ENCODE measurements at regions of chr10 and their contacts with region 1.

Region 1: DNA sequence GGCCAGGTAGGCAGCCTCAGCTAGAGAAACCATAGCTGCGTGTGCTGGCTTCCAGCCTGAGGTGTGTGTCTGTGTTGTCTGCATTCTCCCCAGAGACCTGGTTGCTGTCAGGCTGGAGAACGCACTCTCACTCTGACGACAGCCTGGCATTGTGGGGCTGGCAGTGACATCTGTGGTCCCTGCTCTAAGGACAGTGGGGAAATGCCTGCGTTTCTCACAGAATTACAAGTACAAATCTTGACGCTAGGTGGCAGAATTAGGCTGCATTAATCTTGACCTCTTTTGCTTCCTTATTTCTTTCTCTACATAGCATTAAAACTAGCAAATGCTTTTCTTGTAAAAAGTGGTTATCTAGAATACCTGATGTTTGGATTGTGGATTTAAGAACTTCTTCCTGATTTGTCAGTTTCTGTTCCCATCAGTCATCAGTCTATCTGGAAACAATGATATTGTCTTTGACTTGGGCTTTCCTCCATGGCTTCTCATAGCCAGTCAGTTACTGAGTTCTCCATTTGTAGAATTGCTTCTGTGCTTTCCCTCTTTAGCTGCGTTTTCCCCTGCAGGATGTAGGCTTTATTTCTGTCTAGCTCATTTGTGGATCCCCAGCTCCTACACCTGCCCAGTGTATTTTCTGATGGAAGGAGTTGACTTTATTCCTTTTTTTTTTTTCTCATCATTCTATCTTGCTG is 86.0 kb downstream of the FANK1 start:
- DNase-seq: peak; percentile 79
- H3K4me3 ChIP-seq: no peak overlapping the region
- H3K27ac ChIP-seq: no peak overlapping the region
- H3K4me1 ChIP-seq: no peaks in the 10 kb centered on the region
- H3K27me3 ChIP-seq: no peaks in the 10 kb centered on the region
- CTCF ChIP-seq: peak; percentile 69

Region 2: GRCh38 chr10:125916671-125917425 is 65.6 kb before region 1 on chr10:
- CTCF ChIA-PET with region 1: no interaction called
- POLR2A ChIA-PET with region 1: no interaction called
- intact Hi-C with region 1: no loop called
- DNase-seq: no peak
- H3K4me3 ChIP-seq: no peak overlapping the region
- H3K27ac ChIP-seq: no peak overlapping the region
- H3K4me1 ChIP-seq: no peaks in the 10 kb centered on the region
- H3K27me3 ChIP-seq: no peaks in the 10 kb centered on the region
- CTCF ChIP-seq: no peak

Region 3: DNA sequence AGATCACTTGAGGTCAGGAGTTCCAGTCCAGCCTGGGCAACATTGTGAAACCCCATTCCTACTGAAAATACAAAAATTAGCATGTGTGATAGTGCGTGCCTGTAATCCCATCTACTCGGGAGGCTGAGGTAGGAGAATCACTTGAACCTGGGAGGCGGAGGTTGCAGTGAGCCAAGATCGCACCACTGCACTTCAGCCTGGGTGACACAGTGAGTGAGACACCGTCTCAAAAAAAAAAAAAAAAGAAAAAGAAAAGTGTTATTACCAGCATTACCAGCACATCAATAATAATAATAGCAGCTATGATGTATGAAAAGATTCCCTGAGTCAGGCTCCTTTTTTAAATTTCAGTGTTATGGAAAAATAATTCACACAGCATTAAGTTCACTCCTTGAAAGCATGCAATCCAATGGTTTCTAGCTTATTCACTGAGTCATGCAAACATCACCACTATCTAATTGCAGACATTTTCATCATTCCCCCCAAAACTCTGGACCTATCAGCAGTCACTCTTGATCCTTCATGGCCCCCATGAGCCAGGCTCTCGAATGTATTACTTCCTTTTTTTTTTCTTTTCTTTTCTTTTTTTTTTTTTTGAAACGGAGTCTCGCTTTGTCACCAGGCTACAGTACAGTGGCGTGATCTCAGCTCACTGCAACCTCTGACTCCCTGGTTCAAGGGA is 142.4 kb after region 1 on chr10:
- CTCF ChIA-PET with region 1: interaction called, 11 read pairs
- POLR2A ChIA-PET with region 1: no interaction called
- intact Hi-C with region 1: no loop called
- DNase-seq: peak; percentile 15
- H3K4me3 ChIP-seq: no peak overlapping the region
- H3K27ac ChIP-seq: no peak overlapping the region
- H3K4me1 ChIP-seq: peaks cover 18% of the 10 kb centered on the region
- H3K27me3 ChIP-seq: no peaks in the 10 kb centered on the region
- CTCF ChIP-seq: no peak

Region 4: GRCh38 chr10:126302826-126303665 is 320.6 kb after region 1 on chr10:
- CTCF ChIA-PET with region 1: no interaction called
- POLR2A ChIA-PET with region 1: no interaction called
- intact Hi-C with region 1: loop called (anchors 2 kb)
- DNase-seq: peak; percentile 2
- H3K4me3 ChIP-seq: no peak overlapping the region
- H3K27ac ChIP-seq: no peak overlapping the region
- H3K4me1 ChIP-seq: no peaks in the 10 kb centered on the region
- H3K27me3 ChIP-seq: peaks cover 12% of the 10 kb centered on the region
- CTCF ChIP-seq: peak; percentile 18; the same call in 1 of the 2 replicates

Region 5: DNA sequence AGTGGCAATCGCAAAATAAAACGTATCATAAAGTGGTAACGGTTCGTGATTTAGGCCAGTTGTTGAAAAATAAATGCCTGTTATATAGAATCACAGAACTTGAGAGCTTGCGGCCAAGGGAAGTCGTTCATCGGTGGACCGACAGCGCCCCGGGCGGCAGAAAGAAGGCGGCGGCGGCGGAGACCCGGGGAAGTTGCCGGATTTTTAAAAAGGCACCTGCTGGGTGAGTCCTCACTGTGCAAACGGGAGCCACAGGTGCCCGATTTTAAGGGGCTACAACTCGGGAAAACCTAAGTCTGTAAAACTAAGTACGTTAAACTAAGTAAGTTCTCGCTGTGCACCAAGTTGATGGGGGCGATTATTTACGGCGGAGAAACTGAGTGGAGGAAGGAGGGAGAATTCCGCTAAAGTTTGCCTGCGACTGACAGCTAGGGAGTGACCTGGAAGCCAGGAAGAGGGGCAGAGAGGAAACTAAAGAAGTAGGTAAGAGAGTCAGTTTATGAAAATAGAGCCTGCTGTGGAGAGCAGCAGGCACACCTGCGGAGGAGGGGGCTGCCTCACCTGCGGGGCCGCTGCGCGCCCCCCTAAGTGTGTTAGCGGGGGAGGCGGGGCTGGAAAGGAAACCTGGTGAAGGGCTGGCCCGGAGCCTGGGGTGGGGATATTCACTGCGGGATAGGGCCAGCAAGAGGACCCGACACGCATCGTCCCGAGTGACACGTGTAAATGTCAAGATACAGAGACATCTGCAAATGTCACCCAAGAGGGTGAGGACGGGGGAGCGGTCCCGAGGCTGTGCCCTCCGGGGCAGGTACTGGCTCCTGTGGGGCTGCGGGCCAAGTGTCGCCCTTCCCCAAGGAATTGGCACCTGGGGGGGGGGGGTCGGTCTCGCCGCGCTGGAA is 404.9 kb after region 1 on chr10:
- CTCF ChIA-PET with region 1: interaction called, 3 read pairs
- POLR2A ChIA-PET with region 1: no interaction called
- intact Hi-C with region 1: loop called (anchors 1 kb)
- DNase-seq: peak; percentile 63
- H3K4me3 ChIP-seq: peak overlapping the region; percentile 29
- H3K27ac ChIP-seq: no peak overlapping the region
- H3K4me1 ChIP-seq: no peaks in the 10 kb centered on the region
- H3K27me3 ChIP-seq: peaks cover 42% of the 10 kb centered on the region
- CTCF ChIP-seq: peak; percentile 85

Region 6: GRCh38 chr10:126504063-126504739 is 521.8 kb after region 1 on chr10:
- CTCF ChIA-PET with region 1: interaction called, 8 read pairs
- POLR2A ChIA-PET with region 1: no interaction called
- intact Hi-C with region 1: loop called (anchors 2 kb)
- DNase-seq: peak; percentile 77
- H3K4me3 ChIP-seq: no peak overlapping the region
- H3K27ac ChIP-seq: no peak overlapping the region
- H3K4me1 ChIP-seq: no peaks in the 10 kb centered on the region
- H3K27me3 ChIP-seq: no peaks in the 10 kb centered on the region
- CTCF ChIP-seq: peak; percentile 75

Region 7: GRCh38 chr10:126598003-126598402 is 615.6 kb after region 1 on chr10:
- CTCF ChIA-PET with region 1: no interaction called
- POLR2A ChIA-PET with region 1: no interaction called
- intact Hi-C with region 1: loop called (anchors 1 kb)
- DNase-seq: peak; percentile 63
- H3K4me3 ChIP-seq: no peak overlapping the region
- H3K27ac ChIP-seq: no peak overlapping the region
- H3K4me1 ChIP-seq: no peaks in the 10 kb centered on the region
- H3K27me3 ChIP-seq: no peaks in the 10 kb centered on the region
- CTCF ChIP-seq: peak; percentile 78

Region 8: DNA sequence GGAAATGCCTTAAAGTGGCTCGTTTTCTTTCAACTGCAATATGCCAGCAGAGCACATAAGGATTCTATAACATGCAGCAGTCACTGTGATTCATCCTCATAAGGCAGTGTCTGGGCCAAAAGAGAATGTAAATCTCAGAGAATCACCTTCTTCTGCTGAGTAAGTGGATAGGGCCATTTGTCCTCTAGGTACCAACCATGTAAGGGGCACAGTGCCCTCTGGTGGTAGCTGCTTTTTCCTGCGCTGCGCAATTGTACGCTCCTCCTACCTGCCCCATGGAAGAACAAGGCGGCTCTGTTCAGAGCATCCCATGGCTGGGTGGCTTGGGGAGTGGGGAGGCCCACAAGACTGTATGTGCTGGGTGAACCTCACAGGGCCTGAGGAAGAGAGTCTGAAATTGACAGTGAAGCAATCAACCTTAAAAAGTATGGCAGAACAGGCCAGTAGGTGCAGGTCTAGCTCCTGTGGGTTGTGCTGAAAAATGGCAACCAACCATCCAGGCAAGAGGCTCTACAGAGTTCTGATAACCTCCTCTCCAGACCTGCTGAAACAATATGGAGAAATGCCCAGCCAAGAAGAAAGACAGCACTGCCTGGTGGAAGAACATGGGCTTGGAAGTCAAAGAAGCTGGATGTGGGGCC is 766.7 kb after region 1 on chr10:
- CTCF ChIA-PET with region 1: no interaction called
- POLR2A ChIA-PET with region 1: no interaction called
- intact Hi-C with region 1: loop called (anchors 1 kb)
- DNase-seq: peak; percentile 79
- H3K4me3 ChIP-seq: no peak overlapping the region
- H3K27ac ChIP-seq: no peak overlapping the region
- H3K4me1 ChIP-seq: no peaks in the 10 kb centered on the region
- H3K27me3 ChIP-seq: peaks cover 13% of the 10 kb centered on the region
- CTCF ChIP-seq: peak; percentile 84